PC-3 (cell line): ENCODE measurements at regions of chr12 and their contacts with region 1.

Region 1: DNA sequence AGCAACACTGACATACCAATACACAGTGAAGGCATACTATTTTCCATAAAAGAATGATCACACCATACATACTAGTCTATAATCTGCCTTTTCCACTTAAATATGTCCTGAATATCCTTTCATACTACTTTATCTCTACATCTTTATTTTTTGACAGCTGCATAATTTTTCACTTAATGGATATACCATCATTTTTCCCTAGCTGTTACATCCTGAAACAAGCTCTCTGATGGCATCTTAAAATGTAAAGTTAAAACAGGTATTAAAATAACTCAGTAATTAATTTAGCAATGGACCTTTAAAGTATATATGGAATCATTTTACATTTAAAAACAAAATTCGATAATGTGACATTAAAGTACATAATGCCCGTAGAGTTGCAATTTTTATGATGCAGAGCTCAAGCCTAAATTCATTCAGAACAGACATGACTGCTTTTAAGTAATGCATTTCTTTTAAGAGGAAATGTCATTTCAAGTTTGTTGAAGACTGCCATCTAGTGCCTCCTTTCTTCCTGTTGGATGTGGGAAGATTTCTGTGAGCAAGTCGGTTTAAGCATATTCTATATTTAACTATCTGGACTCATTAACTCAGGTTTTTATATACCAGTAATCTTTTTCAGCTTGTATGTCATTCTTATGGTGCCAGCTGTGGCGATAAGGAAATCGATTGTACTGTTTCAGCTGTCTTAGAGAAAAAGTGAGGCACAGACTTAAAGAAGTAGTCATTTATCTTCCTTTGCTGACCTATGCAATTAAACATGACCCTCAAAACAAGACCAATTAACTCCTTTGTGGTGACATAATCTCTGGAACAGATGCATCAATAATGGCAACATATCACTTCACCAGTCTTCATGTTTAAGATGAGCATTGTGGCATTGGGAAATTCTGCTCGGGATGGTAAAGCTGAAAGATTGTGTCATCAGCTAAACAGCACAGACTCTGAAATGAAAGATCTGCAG is 20.3 kb downstream of the PRICKLE1 start:
- DNase-seq: peak; percentile 75
- ATAC-seq: peak; percentile 79
- H3K4me3 ChIP-seq: no peak overlapping the region
- H3K27ac ChIP-seq: no peak overlapping the region
- H3K4me1 ChIP-seq: peaks cover 7% of the 10 kb centered on the region
- H3K27me3 ChIP-seq: no peaks in the 10 kb centered on the region
- CTCF ChIP-seq: peak; percentile 80

Region 2: DNA sequence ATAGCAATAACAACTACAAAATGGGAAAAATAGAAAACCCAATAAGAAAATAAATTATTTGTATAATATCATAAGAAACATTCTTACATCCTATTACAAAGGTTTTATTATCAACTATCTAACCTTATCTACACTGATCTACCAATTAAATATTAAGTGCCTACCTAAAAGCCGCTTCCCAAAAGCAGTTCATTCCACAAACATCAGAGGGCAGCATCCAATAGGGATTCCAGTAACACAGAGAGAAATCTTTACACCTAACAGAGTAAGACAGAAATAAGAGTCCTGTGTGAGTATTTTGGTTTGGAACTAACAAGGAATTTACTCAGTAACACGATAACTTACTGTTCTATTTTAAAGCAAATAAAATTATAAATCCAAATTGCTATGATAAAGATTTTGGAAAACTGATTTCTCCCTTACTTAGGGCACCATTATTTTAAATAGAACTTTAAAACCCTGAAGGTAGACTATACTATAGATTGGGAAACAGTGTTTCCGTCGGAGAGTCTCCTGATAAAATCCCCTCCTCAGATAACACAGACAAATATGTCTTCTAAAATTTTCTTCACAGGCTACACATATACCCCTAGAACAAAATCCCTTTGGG is 439.5 kb before region 1 on chr12:
- CTCF ChIA-PET with region 1: no interaction called
- POLR2A ChIA-PET with region 1: no interaction called
- intact Hi-C with region 1: loop called (anchors 1 kb)
- DNase-seq: peak; percentile 80
- ATAC-seq: peak; percentile 62
- H3K4me3 ChIP-seq: no peak overlapping the region
- H3K27ac ChIP-seq: no peak overlapping the region
- H3K4me1 ChIP-seq: peaks cover 20% of the 10 kb centered on the region
- H3K27me3 ChIP-seq: no peaks in the 10 kb centered on the region
- CTCF ChIP-seq: peak; percentile 94

Region 3: GRCh38 chr12:42332301-42333285 is 236.6 kb before region 1 on chr12:
- CTCF ChIA-PET with region 1: no interaction called
- POLR2A ChIA-PET with region 1: no interaction called
- intact Hi-C with region 1: loop called (anchors 10 kb)
- DNase-seq: peak; percentile 67
- ATAC-seq: peak; percentile 67
- H3K4me3 ChIP-seq: no peak overlapping the region
- H3K27ac ChIP-seq: no peak overlapping the region
- H3K4me1 ChIP-seq: peaks cover 2% of the 10 kb centered on the region
- H3K27me3 ChIP-seq: no peaks in the 10 kb centered on the region
- CTCF ChIP-seq: peak; percentile 73

Region 4: DNA sequence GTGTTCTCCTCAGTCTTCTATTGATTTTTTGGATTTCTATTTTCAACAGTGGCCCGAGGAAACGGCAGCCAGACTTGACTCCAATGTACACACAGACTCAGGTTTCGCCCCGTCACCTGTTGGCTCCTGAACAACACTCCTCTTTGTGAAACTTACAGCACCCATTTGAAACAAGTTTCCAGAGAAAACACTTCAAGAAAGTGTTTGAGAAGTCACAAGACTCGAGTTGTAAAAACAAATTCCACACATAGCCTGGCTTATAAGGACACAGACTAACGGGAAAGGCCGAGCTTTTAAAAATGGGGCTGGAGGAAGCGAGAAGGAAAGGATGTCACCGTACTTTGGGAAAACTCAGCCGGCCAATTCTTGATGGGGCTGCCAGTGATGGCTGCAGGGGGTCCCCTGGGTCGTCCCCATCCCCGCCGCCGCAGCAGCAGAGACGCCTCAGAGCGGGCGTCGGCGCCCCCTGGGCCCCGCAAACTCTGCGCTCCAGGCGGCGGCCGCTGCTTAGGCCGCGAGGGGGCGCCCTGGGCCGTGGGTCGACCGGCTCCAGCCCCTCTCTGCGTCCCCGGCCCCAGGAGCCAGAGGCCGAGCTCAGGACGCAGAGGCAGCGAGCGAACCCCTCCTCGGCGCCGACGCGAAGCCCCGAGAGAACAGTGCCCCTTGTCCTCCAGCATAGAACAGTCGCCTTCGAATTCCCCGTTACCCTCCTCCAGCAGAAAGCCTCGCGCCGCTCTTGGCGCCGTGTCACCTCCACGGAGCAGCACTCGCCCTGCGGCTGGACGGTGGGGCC is 86.6 kb before region 1 on chr12:
- CTCF ChIA-PET with region 1: interaction called, 19 read pairs
- POLR2A ChIA-PET with region 1: no interaction called
- intact Hi-C with region 1: loop called (anchors 1 kb)
- DNase-seq: peak; percentile 73
- ATAC-seq: peak; percentile 82
- H3K4me3 ChIP-seq: peak overlapping the region; percentile 78
- H3K27ac ChIP-seq: peak overlapping the region; percentile 54
- H3K4me1 ChIP-seq: peaks cover 18% of the 10 kb centered on the region; the same call in 1 of the 2 replicates
- H3K27me3 ChIP-seq: no peaks in the 10 kb centered on the region
- CTCF ChIP-seq: peak; percentile 94

Region 5: GRCh38 chr12:42612231-42612613 is 43.0 kb after region 1 on chr12:
- CTCF ChIA-PET with region 1: no interaction called
- POLR2A ChIA-PET with region 1: no interaction called
- intact Hi-C with region 1: no loop called
- DNase-seq: no peak
- ATAC-seq: no peak; the same call in 1 of the 2 replicates
- H3K4me3 ChIP-seq: no peak overlapping the region
- H3K27ac ChIP-seq: no peak overlapping the region
- H3K4me1 ChIP-seq: no peaks in the 10 kb centered on the region
- H3K27me3 ChIP-seq: no peaks in the 10 kb centered on the region
- CTCF ChIP-seq: no peak

Region 6: GRCh38 chr12:43338848-43339526 is 769.8 kb after region 1 on chr12:
- CTCF ChIA-PET with region 1: no interaction called
- POLR2A ChIA-PET with region 1: no interaction called
- intact Hi-C with region 1: loop called (anchors 5 kb)
- DNase-seq: peak; percentile 70
- ATAC-seq: peak; percentile 82
- H3K4me3 ChIP-seq: no peak overlapping the region; the same call in 1 of the 2 replicates
- H3K27ac ChIP-seq: peak overlapping the region; percentile 15; the same call in 1 of the 2 replicates
- H3K4me1 ChIP-seq: peaks cover 25% of the 10 kb centered on the region
- H3K27me3 ChIP-seq: no peaks in the 10 kb centered on the region
- CTCF ChIP-seq: peak; percentile 73